Ovary (tissue), 10 donors: ENCODE measurements at regions of chr6 and their contacts with region 1.

Region 1: DNA sequence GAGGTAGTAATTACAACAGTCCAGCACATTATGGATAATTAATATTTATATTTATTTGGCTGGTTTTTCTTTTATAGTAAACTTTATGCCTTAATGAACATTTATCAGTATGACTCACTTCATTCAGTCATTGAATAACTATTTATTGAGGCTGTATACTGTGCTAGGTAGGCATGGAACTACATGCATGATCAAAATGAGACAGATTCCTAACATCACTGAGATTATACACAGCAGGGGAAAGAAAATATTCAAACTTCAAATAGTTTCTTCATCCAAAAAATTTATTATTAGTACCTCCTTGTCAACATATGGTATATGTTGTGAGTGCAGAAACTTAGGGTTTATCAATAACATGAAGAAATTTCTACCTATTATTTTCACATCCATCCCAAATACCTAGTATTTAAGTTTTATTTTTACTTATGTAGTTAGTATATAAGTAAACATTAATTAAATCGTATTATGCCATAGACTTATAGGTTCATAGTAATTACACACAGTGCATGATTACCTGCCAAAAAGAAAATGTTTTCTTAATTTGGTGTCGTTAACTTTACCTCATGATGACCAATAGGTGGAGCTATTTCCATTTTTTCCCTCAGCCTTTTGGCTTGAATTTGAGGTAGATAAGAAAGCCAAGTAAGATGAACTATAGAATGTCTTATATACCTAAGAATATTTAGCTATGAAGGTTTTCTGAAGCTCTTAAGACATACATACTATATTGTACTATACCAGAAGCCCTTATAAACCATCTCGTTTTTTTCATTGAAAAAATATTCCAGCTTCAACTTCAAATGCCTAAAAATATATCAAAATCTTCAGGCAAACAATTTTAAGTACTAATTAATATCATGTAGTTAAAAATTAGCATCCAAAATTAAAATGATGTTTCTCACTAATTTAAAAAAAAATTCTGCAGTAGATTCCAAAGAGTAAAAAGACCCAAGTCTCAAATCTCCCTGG is 12.5 kb upstream of the TMEM30A start:
- DNase-seq: no peak
- H3K4me3 ChIP-seq: no peak overlapping the region
- H3K27ac ChIP-seq: no peak overlapping the region
- H3K4me1 ChIP-seq: no peaks in the 10 kb centered on the region
- H3K27me3 ChIP-seq: no peaks in the 10 kb centered on the region
- CTCF ChIP-seq: peak; percentile 39 to 59 (median 49)
- EP300 ChIP-seq: no peak
- POLR2A ChIP-seq: no peak

Region 2: GRCh38 chr6:75150685-75151412 is 146.2 kb before region 1 on chr6:
- intact Hi-C with region 1: no loop called
- DNase-seq: no peak
- H3K4me3 ChIP-seq: no peak overlapping the region
- H3K27ac ChIP-seq: no peak overlapping the region
- H3K4me1 ChIP-seq: peaks cover 5% of the 10 kb centered on the region
- H3K27me3 ChIP-seq: no peaks in the 10 kb centered on the region
- CTCF ChIP-seq: no peak
- EP300 ChIP-seq: no peak
- POLR2A ChIP-seq: no peak

Region 3: GRCh38 chr6:75516757-75517156 is 219.7 kb after region 1 on chr6:
- intact Hi-C with region 1: loop called in 3 of 4 experiments (anchors 10 kb)
- DNase-seq: no peak
- H3K4me3 ChIP-seq: no peak overlapping the region
- H3K27ac ChIP-seq: no peak overlapping the region
- H3K4me1 ChIP-seq: no peaks in the 10 kb centered on the region
- H3K27me3 ChIP-seq: no peaks in the 10 kb centered on the region
- CTCF ChIP-seq: no peak
- EP300 ChIP-seq: no peak
- POLR2A ChIP-seq: no peak

Region 4: DNA sequence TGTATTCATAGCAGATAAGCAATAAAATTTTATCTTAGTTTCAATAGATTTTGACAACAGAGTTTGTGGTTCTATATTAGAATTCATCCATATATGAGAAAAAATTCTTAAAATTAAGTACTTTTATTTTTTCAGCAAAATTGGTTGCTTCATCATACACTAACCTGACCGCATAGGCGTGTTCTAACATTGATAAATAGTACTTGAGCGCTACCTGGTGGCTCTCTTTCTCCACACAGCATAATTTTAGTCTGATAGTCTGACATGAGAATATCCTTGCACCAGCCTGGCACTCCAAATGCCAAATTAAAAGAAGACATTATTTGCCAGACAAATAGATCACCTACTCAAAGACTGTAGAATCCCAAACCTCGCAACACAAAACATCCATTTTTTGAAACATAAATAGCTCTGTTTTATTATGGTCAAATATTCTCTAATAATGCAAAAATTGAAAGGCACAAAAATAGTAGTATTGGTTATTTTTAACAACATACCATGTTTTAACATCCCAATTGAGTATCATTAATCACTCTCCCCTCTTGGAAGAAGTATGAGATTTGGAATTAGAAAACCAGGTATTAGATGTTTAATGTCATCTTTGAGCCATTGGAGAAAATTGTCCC is 229.5 kb after region 1 on chr6:
- intact Hi-C with region 1: loop called in 1 of 4 experiments (anchors 10 kb)
- DNase-seq: peak in 4 of 5 donors; percentile 19 to 62 (median 42)
- H3K4me3 ChIP-seq: no peak overlapping the region
- H3K27ac ChIP-seq: no peak overlapping the region
- H3K4me1 ChIP-seq: no peaks in the 10 kb centered on the region
- H3K27me3 ChIP-seq: no peaks in the 10 kb centered on the region
- CTCF ChIP-seq: peak; percentile 56 to 76 (median 58)
- EP300 ChIP-seq: no peak
- POLR2A ChIP-seq: no peak